H1 (cell line): ENCODE measurements at regions of chr17 and their contacts with region 1.

Region 1: DNA sequence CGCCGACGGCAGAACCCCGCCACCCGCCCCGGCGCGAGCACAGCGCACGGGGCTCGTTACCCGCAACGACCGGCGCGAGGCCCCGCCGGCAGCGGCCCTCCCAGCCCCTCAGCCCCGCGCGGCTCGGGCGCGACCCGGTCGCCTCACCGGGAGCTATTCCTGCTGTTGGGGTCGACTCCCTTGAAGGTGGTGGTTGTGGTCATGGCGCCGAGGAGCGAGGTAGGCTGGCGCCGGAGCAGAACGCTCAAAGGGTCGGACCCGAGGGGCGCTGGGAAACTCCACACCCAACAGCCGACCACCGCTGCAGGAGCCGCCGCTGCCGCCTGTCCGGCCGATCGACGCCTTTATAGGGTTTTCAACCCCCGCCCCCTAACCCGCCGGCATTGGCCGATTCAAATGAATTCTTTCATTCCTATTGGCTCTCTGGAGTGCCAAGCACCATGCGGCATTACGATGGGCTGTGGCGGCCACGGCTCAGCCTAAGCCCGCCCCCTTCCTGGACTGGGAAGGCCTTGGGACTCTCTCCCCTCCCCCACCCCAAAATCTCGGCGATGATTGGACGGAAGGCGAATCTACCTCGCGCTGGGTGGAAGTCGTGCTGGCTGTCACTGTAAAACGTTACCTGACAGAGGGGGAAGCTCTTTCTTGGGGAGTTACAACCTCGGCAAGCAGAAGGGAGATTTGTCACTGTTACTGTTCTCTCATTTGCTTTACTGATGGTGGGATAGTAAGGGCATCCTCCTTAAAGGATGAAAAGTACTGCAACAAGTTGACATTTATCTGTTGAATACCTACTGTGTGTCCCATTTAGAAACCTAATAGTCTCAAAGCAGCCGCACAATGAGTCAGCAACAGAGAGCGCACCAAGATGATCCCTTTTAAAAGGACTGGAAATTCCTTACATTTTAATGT is at the start of gene JPT1:
- DNase-seq: peak; percentile 95 to 99
- H3K4me3 ChIP-seq: peak within 1 kb of the TSS; percentile 87 to 95 (median 94)
- H3K27ac ChIP-seq: peak within 1 kb of the TSS; percentile 53
- H3K4me1 ChIP-seq: peaks cover 3 to 12% (median 9%) of the 10 kb centered on the region in 4 experiments; a peak in 6 of 7 replicates
- H3K27me3 ChIP-seq: no peaks in the 10 kb centered on the region
- CTCF ChIP-seq: no peak
- EP300 ChIP-seq: no peak
- POLR2A ChIP-seq: peak; percentile 100
- RAD21 ChIP-seq: no peak
- total RNA-seq, gene JPT1: 340 and 369 TPM in 2 replicates

Region 2: DNA sequence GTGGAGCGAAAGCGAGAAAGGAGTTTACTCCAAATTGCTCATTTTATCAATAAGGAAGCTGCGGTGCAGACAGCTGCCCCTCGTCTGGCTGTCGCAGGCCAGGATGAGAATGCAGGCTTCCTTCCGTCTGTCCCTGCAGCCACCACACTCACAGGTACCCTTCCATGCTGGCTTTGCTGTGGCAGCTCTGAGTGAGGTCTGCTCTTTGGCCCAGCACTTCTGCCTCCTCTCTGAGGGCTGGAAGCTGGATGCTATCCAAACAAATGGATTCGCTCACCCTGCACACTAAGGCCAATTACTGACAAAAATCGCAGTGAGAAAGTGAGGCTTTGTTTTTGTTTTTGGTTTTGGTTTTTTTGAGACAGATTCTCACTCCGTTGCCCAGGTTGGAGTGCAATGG is 37.7 kb before region 1 on chr17:
- CTCF ChIA-PET with region 1: interaction called, 14 read pairs
- POLR2A ChIA-PET with region 1: interaction called, 11 read pairs
- DNase-seq: no peak
- H3K4me3 ChIP-seq: no peak overlapping the region
- H3K27ac ChIP-seq: no peak overlapping the region
- H3K4me1 ChIP-seq: no peaks in the 10 kb centered on the region; a peak in 1 of 7 replicates
- H3K27me3 ChIP-seq: no peaks in the 10 kb centered on the region
- CTCF ChIP-seq: no peak
- EP300 ChIP-seq: no peak
- POLR2A ChIP-seq: no peak
- RAD21 ChIP-seq: no peak

Region 3: DNA sequence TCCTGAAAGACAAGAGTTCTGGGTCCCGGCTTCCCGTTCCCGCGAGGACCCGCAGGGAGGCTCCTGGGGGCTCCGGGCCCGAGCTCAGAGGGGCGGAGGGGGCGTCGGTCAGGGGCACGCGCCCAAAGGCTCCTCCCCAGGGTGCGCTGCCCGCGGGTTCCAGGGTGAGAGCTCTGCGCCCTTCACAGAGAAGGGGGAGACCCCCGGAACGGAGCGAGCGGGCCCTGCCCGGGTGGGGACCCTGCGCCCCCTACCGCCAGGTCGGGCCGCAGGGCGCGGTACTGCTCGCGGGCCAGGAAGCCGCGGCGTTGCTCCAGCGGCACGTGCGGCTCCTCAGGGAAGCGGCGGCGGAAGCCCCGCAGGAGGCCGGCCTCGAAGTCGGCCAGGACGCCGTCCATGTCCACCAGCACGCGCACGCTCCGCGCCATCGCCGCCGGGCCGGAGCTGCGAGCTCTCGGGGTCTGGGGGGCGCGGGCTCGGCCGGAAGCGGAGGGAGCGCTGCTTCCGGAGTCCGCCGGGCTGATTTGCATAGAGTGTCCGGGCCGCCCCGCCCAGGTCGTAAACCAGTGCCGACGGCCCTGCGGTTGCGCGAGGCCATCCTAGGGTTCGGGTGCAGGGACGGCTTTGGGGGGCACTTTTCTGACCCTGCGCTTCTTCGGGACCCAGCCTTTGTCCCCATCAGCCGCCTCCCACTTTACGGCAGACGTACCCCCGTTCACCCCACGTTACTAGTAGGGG is 23.0 kb before region 1 on chr17 and contains the start of gene NT5C:
- CTCF ChIA-PET with region 1: interaction called, 26 read pairs
- POLR2A ChIA-PET with region 1: interaction called, 29 read pairs
- DNase-seq: peak; percentile 58 to 91
- H3K4me3 ChIP-seq: peak within 1 kb of the TSS; percentile 69 to 95 (median 74)
- H3K27ac ChIP-seq: peak within 1 kb of the TSS; percentile 81
- H3K4me1 ChIP-seq: peaks cover 0 to 5% (median 4%) of the 10 kb centered on the region in 4 experiments; a peak in 5 of 7 replicates
- H3K27me3 ChIP-seq: no peaks in the 10 kb centered on the region
- CTCF ChIP-seq: peak; percentile 65 to 72 (median 68)
- EP300 ChIP-seq: no peak
- POLR2A ChIP-seq: peak; percentile 72 to 75; a peak in 2 of 3 replicates
- RAD21 ChIP-seq: peak; percentile 32 to 42; a peak in 2 of 4 replicates
- total RNA-seq, gene NT5C: 52.1 and 66.9 TPM in 2 replicates

Region 4: GRCh38 chr17:75142239-75142971 is 12.0 kb before region 1 on chr17:
- CTCF ChIA-PET with region 1: no interaction called
- POLR2A ChIA-PET with region 1: interaction called, 32 read pairs
- DNase-seq: no peak
- H3K4me3 ChIP-seq: no peak overlapping the region
- H3K27ac ChIP-seq: no peak overlapping the region
- H3K4me1 ChIP-seq: no peaks in the 10 kb centered on the region
- H3K27me3 ChIP-seq: no peaks in the 10 kb centered on the region
- CTCF ChIP-seq: no peak
- EP300 ChIP-seq: no peak
- POLR2A ChIP-seq: no peak
- RAD21 ChIP-seq: no peak

Region 5: DNA sequence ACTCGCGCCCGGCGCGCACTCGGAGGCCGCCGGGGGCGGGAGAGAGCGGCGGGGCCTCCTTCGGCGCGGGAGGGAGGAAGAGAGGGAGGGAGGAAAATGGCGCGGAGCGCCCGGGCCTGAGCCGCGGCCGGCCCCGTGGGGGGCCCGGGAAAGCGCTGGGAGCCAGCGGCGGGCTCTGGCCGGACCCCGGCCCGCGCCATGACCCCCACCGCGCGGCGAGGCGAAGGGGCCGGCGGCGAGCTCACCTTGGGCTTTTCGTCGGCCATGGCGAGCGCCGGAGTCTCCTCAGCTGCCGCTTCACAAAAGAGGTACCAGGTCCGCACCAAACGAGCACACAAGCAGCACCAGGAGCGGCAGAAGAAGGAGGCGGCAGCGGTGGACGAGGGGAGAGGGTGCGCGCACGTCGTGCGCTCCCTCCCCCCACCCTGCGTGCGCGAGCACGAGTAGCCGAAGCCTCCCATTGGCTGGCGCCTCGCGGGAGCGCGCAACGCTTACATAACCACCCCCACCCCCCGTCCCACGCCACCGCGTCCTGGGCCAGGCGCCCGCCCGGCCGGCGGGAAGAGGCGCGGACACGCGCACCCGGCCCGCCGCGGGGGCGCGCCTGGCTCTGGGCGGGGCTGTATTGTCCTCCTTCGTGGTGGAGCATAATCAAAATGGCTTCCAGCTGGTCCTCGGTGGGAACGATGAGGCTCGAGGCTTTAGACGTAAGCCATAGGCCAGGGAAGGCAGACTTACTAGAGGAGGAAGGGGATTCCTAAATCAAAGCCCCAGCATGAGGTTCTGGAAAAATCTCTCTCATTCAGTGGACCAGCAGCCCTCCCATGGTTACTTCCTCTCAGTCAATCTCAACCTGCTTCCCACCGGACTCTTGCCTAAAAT is 28.4 kb after region 1 on chr17 and contains the start of gene SUMO2:
- CTCF ChIA-PET with region 1: no interaction called
- POLR2A ChIA-PET with region 1: interaction called, 213 read pairs
- DNase-seq: peak; percentile 93
- H3K4me3 ChIP-seq: peak within 1 kb of the TSS; percentile 97 to 99 (median 98)
- H3K27ac ChIP-seq: peak within 1 kb of the TSS; percentile 98
- H3K4me1 ChIP-seq: peaks cover 0 to 5% (median under 1%) of the 10 kb centered on the region in 4 experiments; a peak in 4 of 7 replicates
- H3K27me3 ChIP-seq: no peaks in the 10 kb centered on the region
- CTCF ChIP-seq: peak in 1 of 3 experiments; percentile 15; a peak in 1 of 4 replicates
- EP300 ChIP-seq: 0 out of 3 replicates have a peak, but pooled peaks of 1 of the 2 experiments have one; percentile 5
- POLR2A ChIP-seq: peak; percentile 44 to 89
- RAD21 ChIP-seq: no peak
- total RNA-seq, gene SUMO2: 779 and 788 TPM in 2 replicates